Cardiac septum (tissue), 1 donor: ENCODE measurements at regions of chr13 and their contacts with region 1.

Region 1: DNA sequence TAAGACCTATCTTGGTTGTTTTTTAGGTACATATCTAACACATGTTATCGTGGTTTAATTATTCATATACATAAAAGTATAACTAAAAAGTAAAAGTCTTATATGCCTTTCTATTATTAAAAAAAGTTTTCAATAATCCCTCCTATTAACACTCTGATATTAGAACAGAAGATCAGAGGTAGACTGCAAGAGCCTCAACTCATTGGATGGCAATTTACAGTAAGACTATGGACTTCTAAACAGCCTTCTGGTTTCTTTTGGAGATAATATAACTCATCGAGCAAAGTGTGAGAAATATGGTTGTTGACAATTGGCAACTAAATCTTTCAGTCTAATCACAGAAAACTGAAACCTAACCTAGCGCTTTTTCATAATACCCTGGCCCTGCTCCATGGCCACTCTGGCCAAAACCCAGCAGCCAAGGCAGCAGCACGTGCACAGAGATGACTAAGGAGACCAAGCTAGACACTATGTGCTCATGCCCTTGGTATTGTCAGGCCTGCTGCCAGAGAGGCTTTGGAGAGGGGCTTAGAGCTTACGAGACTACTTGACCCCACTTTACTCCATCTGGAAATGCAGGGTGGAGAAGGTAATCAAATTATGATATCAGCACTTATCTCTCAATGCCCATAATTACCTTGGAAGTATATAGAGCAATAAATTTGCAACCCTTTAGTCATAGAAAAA is 40.6 kb upstream of the EEF1AKMT1 start:
- DNase-seq: peak; percentile 89

Region 2: GRCh38 chr13:20843166-20843565 is 28.8 kb after region 1 on chr13:
- intact Hi-C with region 1: loop called (anchors 2 kb)
- DNase-seq: no peak

Region 3: GRCh38 chr13:20869542-20869941 is 55.2 kb after region 1 on chr13:
- intact Hi-C with region 1: no loop called
- DNase-seq: no peak